H1 (cell line): ENCODE measurements at regions of chr11 and their contacts with region 1.

Region 1: GRCh38 chr11:64846998-64847666 is 2.7 kb upstream of the CDC42BPG start:
- DNase-seq: peak; percentile 87 to 98
- H3K4me3 ChIP-seq: no peak overlapping the region
- H3K27ac ChIP-seq: no peak overlapping the region
- H3K4me1 ChIP-seq: peaks cover 0 to 38% (median 21%) of the 10 kb centered on the region in 4 experiments; a peak in 6 of 7 replicates
- H3K27me3 ChIP-seq: no peaks in the 10 kb centered on the region
- CTCF ChIP-seq: peak in 2 of 3 experiments; percentile 91 to 97; a peak in 3 of 4 replicates
- EP300 ChIP-seq: no peak
- POLR2A ChIP-seq: no peak
- RAD21 ChIP-seq: peak; percentile 91 to 97

Region 2: DNA sequence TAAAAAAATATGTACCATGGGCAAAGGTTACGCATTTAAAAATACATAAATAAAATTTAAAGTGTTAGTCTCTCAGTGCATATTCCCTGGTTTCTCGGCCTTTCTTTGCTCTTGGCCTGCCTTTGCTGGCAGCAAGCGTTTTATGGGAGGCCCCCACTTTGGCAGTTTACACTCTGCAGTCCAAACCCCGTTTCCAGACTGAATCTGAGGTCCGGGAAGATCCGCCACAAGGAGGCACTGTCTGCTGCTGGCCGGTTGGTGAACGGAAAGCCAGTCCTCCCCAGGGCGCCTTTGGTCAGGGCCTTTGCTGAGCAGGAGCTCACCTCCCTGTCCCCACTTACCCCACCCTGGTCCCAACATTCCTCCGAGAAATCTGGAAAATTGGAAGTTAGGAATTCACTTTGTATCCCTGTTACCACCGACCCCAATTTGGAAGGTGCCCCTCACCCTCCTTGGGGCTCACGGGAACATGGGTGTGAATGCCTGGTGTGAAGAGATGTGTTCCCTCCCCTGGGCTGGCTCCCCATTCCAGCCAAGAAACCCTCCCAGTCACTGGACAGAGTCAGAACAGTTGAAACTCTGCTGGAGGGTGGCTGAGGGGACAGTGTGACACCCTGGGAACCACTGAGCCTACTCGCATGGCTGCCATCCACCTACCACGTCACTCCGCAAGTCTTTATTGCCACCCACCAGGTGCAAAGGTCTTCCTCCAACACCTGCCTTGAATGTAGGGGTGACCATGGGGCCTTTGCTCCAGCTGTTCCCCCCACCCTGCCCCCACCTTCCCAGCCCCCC is 59.4 kb before region 1 on chr11:
- CTCF ChIA-PET with region 1: interaction called, 31 read pairs
- POLR2A ChIA-PET with region 1: interaction called, 3 read pairs
- DNase-seq: peak in 1 of 2 experiments; percentile 89
- H3K4me3 ChIP-seq: no peak overlapping the region
- H3K27ac ChIP-seq: no peak overlapping the region
- H3K4me1 ChIP-seq: no peaks in the 10 kb centered on the region
- H3K27me3 ChIP-seq: no peaks in the 10 kb centered on the region
- CTCF ChIP-seq: peak; percentile 87 to 91 (median 90)
- EP300 ChIP-seq: no peak
- POLR2A ChIP-seq: no peak
- RAD21 ChIP-seq: peak; percentile 73 to 82

Region 3: DNA sequence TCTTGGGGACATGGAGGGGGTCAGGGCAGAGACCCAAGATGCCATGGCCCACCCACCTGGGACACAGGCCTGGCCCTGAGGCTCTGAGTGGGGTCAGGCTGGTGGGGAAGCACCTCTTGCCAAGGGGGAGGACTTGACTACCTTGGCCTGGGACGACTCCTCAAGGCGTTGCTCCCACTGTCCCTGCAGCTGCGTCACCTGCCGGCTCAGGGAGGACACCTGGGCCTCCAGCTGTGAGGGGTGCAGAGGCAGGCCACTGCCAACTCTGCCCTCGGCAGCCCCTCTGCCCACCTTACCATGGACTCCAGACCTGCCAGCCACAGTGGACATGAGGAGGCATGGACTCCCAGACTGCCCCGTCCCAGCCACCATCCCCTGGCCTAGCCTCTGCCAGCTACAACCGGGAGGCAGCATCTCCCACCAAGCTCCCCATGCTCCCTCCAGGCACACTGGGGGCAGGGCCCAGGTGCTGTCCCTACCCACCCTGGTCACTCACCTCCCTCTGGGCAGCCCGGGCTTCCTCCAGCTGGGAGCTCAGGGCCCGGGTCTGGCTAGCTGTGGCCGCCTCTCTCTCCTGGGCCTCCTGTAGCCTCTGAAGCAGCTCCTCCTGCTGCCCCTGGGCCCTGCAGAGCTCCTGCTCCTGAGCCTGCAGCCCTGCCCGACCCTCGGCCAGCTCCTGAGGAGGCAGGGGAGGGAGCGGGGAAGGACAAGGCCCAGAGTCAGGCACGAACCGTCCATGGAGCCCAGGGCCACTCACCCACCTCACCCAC is 11.3 kb before region 1 on chr11:
- CTCF ChIA-PET with region 1: interaction called, 16 read pairs
- POLR2A ChIA-PET with region 1: interaction called, 3 read pairs
- DNase-seq: no peak
- H3K4me3 ChIP-seq: no peak overlapping the region
- H3K27ac ChIP-seq: no peak overlapping the region
- H3K4me1 ChIP-seq: no peaks in the 10 kb centered on the region; a peak in 1 of 7 replicates
- H3K27me3 ChIP-seq: no peaks in the 10 kb centered on the region
- CTCF ChIP-seq: no peak
- EP300 ChIP-seq: no peak
- POLR2A ChIP-seq: no peak
- RAD21 ChIP-seq: no peak

Region 4: DNA sequence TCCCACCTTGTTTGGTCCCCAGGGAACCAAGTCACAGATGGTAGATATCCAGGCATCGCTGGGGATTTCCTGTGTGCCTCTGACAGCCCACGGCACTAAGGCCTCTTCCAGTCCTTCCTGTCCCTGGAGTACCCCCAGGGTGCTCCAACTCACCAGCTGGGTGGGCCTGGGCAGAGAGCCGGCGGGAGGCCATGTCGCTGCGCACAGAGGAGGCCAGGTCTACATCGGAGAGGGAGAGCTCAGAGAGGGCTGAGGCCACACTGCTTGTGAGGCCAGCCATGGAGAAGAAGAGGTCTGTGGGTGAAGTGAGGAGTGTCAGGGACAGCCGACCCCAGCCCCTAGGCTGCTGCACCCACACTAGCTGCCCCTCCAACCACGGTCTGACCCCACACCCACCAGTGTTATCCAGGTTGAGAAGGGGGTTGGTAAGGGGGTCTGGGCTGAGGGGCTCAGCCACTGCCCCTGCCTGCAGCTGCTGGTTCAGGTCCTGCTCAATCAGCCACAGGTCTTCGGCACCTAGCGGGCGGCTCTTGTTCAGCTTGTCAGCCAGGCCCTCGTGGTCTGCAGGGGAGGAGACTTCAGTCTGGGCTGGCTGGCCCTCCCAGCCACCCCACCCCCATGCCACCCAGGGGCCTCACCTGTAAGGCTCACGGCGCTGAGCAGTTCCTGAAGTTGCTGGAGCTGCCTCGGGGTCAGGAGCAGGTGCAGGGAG is 64.7 kb after region 1 on chr11:
- CTCF ChIA-PET with region 1: interaction called, 37 read pairs
- POLR2A ChIA-PET with region 1: no interaction called
- DNase-seq: no peak
- H3K4me3 ChIP-seq: no peak overlapping the region
- H3K27ac ChIP-seq: no peak overlapping the region
- H3K4me1 ChIP-seq: peaks cover 0 to 11% (median 4%) of the 10 kb centered on the region in 4 experiments; a peak in 5 of 7 replicates
- H3K27me3 ChIP-seq: no peaks in the 10 kb centered on the region
- CTCF ChIP-seq: no peak
- EP300 ChIP-seq: no peak
- POLR2A ChIP-seq: no peak
- RAD21 ChIP-seq: no peak

Region 5: GRCh38 chr11:64954201-64954600 is 107.1 kb after region 1 on chr11:
- CTCF ChIA-PET with region 1: interaction called, 13 read pairs
- POLR2A ChIA-PET with region 1: no interaction called
- DNase-seq: no peak
- H3K4me3 ChIP-seq: no peak overlapping the region
- H3K27ac ChIP-seq: no peak overlapping the region
- H3K4me1 ChIP-seq: no peaks in the 10 kb centered on the region
- H3K27me3 ChIP-seq: no peaks in the 10 kb centered on the region
- CTCF ChIP-seq: no peak
- EP300 ChIP-seq: no peak
- POLR2A ChIP-seq: no peak
- RAD21 ChIP-seq: no peak

Region 6: GRCh38 chr11:65111744-65112414 is 264.7 kb after region 1 on chr11 and contains the start of gene TM7SF2:
- CTCF ChIA-PET with region 1: interaction called, 10 read pairs
- POLR2A ChIA-PET with region 1: interaction called, 4 read pairs
- DNase-seq: peak; percentile 85 to 95
- H3K4me3 ChIP-seq: peak within 1 kb of the TSS; percentile 76 to 90 (median 85)
- H3K27ac ChIP-seq: peak within 1 kb of the TSS; percentile 42; the same call in 1 of the 2 replicates
- H3K4me1 ChIP-seq: peaks cover 2 to 26% (median 19%) of the 10 kb centered on the region in 4 experiments
- H3K27me3 ChIP-seq: no peaks in the 10 kb centered on the region
- CTCF ChIP-seq: no peak
- EP300 ChIP-seq: no peak
- POLR2A ChIP-seq: peak in 1 of 2 experiments; percentile 91; a peak in 2 of 3 replicates
- RAD21 ChIP-seq: no peak
- total RNA-seq, gene TM7SF2: 40.1 and 42.4 TPM in 2 replicates